MCF 10A (cell line): ENCODE measurements at regions of chr6 and their contacts with region 1.

Region 1: DNA sequence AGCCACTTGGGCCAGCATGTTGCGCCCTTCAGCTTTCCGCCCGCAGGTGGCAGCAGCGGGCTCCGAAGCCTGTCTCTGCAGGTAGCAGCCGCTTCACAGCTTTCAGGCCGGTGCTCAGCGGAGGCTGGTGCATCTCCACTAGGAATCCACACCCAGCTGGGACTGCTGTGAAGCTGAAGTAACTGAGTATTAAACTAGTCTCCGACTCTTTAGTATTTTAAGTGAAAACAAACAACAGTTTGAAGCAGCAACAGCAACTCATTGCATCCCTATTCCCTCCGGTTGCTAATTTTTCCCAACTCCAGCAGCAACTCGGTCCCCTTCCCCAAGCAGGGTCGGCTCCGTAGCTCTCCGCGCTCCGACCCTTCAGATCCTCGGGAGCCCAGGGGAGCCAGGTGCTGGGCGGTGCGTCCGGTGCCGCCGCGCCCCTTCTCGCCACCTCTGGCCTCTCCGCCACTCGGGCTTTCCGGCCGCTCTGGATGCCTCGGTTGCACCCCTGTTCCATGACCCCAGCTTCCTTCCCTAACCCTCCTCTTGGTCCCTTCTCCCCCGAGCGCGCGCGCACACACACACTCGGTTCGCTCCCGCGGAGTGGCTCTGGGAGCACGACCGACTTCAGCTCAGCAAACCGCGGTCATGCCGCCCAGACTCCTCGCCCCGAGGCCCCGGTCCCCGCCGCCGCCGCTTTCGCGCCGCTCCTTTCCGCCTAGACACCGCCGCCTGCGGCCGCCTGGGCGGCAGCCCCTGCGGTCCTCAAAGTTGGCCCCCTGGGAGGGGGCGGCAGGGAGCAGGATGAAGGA is 768 bp upstream of the NKAIN2 start:
- DNase-seq: peak; percentile 88
- H3K4me3 Mint-ChIP-seq: peak overlapping the region; percentile 83
- H3K27ac Mint-ChIP-seq: no peak overlapping the region
- H3K4me1 Mint-ChIP-seq: peaks cover 21% of the 10 kb centered on the region
- H3K27me3 Mint-ChIP-seq: no peaks in the 10 kb centered on the region
- CTCF ChIP-seq: peak; percentile 85

Region 2: GRCh38 chr6:123598011-123598410 is 204.9 kb before region 1 on chr6:
- CTCF ChIA-PET with region 1: no interaction called
- POLR2A ChIA-PET with region 1: no interaction called
- intact Hi-C with region 1: no loop called
- DNase-seq: no peak
- H3K4me3 Mint-ChIP-seq: no peak overlapping the region
- H3K27ac Mint-ChIP-seq: no peak overlapping the region
- H3K4me1 Mint-ChIP-seq: no peaks in the 10 kb centered on the region
- H3K27me3 Mint-ChIP-seq: peaks cover 78% of the 10 kb centered on the region
- CTCF ChIP-seq: no peak

Region 3: GRCh38 chr6:123829302-123829953 is 26.5 kb after region 1 on chr6:
- CTCF ChIA-PET with region 1: interaction called, 13 read pairs
- POLR2A ChIA-PET with region 1: interaction called, 11 read pairs
- intact Hi-C with region 1: no loop called
- DNase-seq: peak; percentile 53
- H3K4me3 Mint-ChIP-seq: no peak overlapping the region
- H3K27ac Mint-ChIP-seq: peak overlapping the region; percentile 77
- H3K4me1 Mint-ChIP-seq: peaks cover 23% of the 10 kb centered on the region
- H3K27me3 Mint-ChIP-seq: no peaks in the 10 kb centered on the region
- CTCF ChIP-seq: no peak

Region 4: DNA sequence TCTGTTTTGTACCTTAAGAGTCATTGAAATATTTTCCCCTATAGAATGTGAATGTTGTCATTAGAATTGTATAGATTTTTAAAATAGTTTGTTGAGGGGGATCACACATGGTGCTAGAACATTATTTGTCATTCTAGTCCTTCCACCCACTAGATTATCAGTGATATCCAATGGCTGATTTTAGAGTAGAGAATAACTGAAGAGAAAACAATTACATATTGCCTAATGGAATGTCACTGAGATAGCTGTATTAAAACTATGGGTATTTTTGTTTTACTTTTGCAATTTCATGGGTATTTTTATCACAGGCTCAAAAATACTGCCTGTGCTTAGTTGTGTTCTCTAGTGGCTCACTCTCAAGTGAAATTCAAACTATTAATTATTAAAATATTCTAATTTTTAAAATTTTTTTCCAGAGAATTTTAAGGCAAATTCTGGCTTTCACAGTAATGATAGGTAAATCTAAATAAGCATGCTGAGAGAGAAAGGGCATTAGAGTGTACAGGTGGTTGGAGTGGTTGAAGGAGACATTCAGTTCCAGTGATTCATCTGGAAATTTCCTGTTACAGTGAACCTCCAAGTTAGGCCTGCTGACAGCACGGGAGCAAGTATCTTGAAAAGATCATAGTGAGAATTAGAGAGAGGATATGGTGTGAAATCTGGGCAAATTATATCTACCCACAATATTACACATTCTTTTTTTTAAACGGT is 400.4 kb after region 1 on chr6:
- CTCF ChIA-PET with region 1: interaction called, 4 read pairs
- POLR2A ChIA-PET with region 1: no interaction called
- intact Hi-C with region 1: loop called (anchors 1 kb)
- DNase-seq: peak; percentile 79
- H3K4me3 Mint-ChIP-seq: peak overlapping the region; percentile 17
- H3K27ac Mint-ChIP-seq: peak overlapping the region; percentile 99
- H3K4me1 Mint-ChIP-seq: peaks cover 28% of the 10 kb centered on the region
- H3K27me3 Mint-ChIP-seq: no peaks in the 10 kb centered on the region
- CTCF ChIP-seq: no peak

Region 5: DNA sequence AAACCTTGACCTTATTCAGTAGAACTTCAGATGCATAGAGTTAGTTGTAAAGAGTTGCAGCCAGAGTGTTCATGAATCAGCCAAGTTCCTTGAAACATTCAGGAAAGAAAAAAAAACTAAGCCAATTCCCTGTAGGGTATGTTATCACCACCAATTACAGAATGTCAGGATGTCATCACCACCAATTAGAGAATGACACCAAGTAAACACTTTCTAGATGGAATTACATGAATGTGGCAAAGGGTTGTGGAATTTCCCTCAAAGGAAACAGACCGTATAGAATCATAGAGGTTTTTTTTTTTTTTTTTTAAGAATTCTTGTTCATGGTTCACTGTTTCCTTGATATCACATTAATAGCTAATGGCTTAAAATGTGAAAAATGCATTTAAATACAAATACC is 687.2 kb after region 1 on chr6:
- CTCF ChIA-PET with region 1: no interaction called
- POLR2A ChIA-PET with region 1: no interaction called
- intact Hi-C with region 1: loop called (anchors 5 kb)
- DNase-seq: peak; percentile 27
- H3K4me3 Mint-ChIP-seq: no peak overlapping the region
- H3K27ac Mint-ChIP-seq: no peak overlapping the region
- H3K4me1 Mint-ChIP-seq: peaks cover 6% of the 10 kb centered on the region
- H3K27me3 Mint-ChIP-seq: no peaks in the 10 kb centered on the region
- CTCF ChIP-seq: no peak

Region 6: GRCh38 chr6:124795643-124796463 is 993.0 kb after region 1 on chr6:
- CTCF ChIA-PET with region 1: interaction called, 54 read pairs
- POLR2A ChIA-PET with region 1: interaction called, 11 read pairs
- intact Hi-C with region 1: loop called (anchors 1 kb)
- DNase-seq: peak; percentile 52
- H3K4me3 Mint-ChIP-seq: no peak overlapping the region
- H3K27ac Mint-ChIP-seq: no peak overlapping the region
- H3K4me1 Mint-ChIP-seq: peaks cover 16% of the 10 kb centered on the region
- H3K27me3 Mint-ChIP-seq: no peaks in the 10 kb centered on the region
- CTCF ChIP-seq: peak; percentile 85